HCT116 (cell line): ENCODE measurements at regions of chr1 and their contacts with region 1.

Region 1: GRCh38 chr1:69737527-69738185 is 169.9 kb downstream of the LRRC7 start:
- DNase-seq: peak; percentile 61
- ATAC-seq: peak; percentile 81
- H3K4me3 ChIP-seq: no peak overlapping the region
- H3K27ac ChIP-seq: no peak overlapping the region
- H3K4me1 ChIP-seq: no peaks in the 10 kb centered on the region
- H3K27me3 ChIP-seq: peaks cover 30% of the 10 kb centered on the region
- CTCF ChIP-seq: peak; percentile 46 to 78 (median 65); a peak in 5 of 6 replicates
- POLR2A ChIP-seq: no peak
- RAD21 ChIP-seq: peak; percentile 79

Region 2: DNA sequence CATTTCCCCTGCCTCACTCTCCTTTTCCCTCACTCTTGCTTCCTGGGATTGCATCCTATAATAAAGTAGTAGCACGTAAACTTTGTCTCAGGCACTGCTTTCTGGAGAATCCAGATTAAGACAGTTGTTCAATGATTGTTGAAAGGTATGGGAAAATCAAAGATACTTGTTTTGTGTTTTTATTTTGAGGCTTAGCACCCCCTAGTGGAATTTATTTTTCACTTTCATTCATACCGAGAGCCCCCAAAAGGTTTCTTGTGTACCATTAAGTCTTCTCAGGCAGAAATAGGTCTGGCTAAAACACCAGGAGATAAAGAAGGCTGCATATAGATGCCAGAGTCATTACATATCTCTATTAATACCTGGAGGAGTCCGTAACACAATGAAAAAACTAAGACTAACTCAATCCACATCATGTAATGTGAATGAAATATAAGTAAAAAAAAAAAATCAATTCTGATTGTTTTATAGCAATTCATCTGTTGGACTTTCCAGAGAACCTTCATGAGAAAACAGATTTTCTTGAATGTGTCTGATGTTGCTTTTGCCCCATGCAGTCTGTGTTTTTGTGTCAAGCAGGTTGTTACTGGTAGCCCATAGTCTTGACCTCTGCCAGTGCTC is 1391.4 kb before region 1 on chr1:
- CTCF ChIA-PET with region 1: no interaction called
- POLR2A ChIA-PET with region 1: no interaction called
- RAD21 ChIA-PET with region 1: no interaction called
- intact Hi-C with region 1: loop called (anchors 10 kb)
- DNase-seq: peak; percentile 45
- ATAC-seq: peak; percentile 42
- H3K4me3 ChIP-seq: no peak overlapping the region
- H3K27ac ChIP-seq: no peak overlapping the region
- H3K4me1 ChIP-seq: peaks cover 0 to 31% of the 10 kb centered on the region in 2 experiments; a peak in 3 of 4 replicates
- H3K27me3 ChIP-seq: no peaks in the 10 kb centered on the region
- CTCF ChIP-seq: peak; percentile 46 to 75 (median 57); a peak in 5 of 6 replicates
- POLR2A ChIP-seq: no peak
- RAD21 ChIP-seq: peak; percentile 57

Region 3: DNA sequence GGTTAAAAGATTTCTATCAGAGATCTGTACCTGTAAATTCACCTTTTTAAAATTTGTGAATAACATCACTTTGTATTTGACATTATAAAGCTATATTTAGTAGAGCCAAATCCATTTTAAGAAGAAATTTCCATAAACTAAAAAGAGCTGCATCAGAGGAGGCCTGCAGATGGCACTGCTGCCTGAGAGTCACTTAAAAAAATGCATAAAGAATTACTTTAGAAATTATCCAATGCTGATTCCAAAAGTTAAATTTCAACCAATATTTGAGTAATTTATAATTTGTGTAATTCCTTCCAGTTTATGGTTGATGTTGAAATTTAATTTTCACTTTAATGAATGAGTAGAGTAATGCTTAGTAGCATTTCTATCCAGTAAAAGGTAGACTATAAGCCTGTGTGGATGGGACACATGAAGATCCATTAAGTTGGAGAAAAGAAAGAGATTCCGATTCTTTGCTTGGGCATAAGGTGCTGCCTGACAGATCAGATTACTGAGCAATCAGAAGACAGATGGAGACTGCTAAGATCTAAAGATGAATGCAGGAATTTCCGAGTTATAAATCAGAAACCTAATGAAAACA is 1267.2 kb before region 1 on chr1:
- CTCF ChIA-PET with region 1: no interaction called
- POLR2A ChIA-PET with region 1: no interaction called
- RAD21 ChIA-PET with region 1: interaction called in 1 of 2 experiments, 3 read pairs
- intact Hi-C with region 1: loop called (anchors 2 kb)
- DNase-seq: no peak
- ATAC-seq: peak; percentile 49
- H3K4me3 ChIP-seq: no peak overlapping the region
- H3K27ac ChIP-seq: no peak overlapping the region
- H3K4me1 ChIP-seq: no peaks in the 10 kb centered on the region
- H3K27me3 ChIP-seq: no peaks in the 10 kb centered on the region
- CTCF ChIP-seq: peak; percentile 54 to 72 (median 58); a peak in 5 of 6 replicates
- POLR2A ChIP-seq: no peak
- RAD21 ChIP-seq: peak; percentile 61

Region 4: GRCh38 chr1:68600049-68600661 is 1137.5 kb before region 1 on chr1:
- CTCF ChIA-PET with region 1: no interaction called
- POLR2A ChIA-PET with region 1: no interaction called
- RAD21 ChIA-PET with region 1: no interaction called
- intact Hi-C with region 1: loop called (anchors 1 kb)
- DNase-seq: peak; percentile 13
- ATAC-seq: peak; percentile 74; the same call in 1 of the 2 replicates
- H3K4me3 ChIP-seq: no peak overlapping the region
- H3K27ac ChIP-seq: no peak overlapping the region
- H3K4me1 ChIP-seq: no peaks in the 10 kb centered on the region
- H3K27me3 ChIP-seq: no peaks in the 10 kb centered on the region
- CTCF ChIP-seq: peak; percentile 26 to 80 (median 70); a peak in 5 of 6 replicates
- POLR2A ChIP-seq: no peak
- RAD21 ChIP-seq: peak; percentile 65

Region 5: GRCh38 chr1:68819190-68819829 is 918.3 kb before region 1 on chr1:
- CTCF ChIA-PET with region 1: interaction called, 5 read pairs
- POLR2A ChIA-PET with region 1: no interaction called
- RAD21 ChIA-PET with region 1: no interaction called
- intact Hi-C with region 1: loop called (anchors 10 kb)
- DNase-seq: peak; percentile 31
- ATAC-seq: peak; percentile 97
- H3K4me3 ChIP-seq: no peak overlapping the region
- H3K27ac ChIP-seq: no peak overlapping the region
- H3K4me1 ChIP-seq: no peaks in the 10 kb centered on the region
- H3K27me3 ChIP-seq: peaks cover 4% of the 10 kb centered on the region; the same call in 1 of the 2 replicates
- CTCF ChIP-seq: peak; percentile 22 to 70 (median 61); a peak in 5 of 6 replicates
- POLR2A ChIP-seq: no peak
- RAD21 ChIP-seq: peak; percentile 69

Region 6: DNA sequence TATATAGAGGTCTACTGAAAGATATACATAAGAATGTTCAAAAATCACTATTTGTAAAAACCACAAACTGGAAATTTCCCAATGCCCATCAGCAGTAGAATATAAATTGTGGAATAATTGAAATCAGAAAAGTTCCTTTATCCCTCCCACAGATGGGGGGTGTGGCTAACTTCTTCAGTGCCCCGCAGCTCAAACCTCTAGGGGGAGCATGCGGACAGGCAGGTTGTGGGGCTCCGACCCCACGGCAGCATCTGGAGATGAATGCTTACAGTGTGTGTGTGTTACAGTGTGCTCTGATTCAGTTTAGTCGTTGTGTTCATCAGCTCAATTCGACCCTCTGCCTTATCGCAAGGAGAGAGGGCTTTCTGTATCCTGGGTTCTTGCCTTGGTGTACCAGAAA is 432.0 kb before region 1 on chr1:
- CTCF ChIA-PET with region 1: no interaction called
- POLR2A ChIA-PET with region 1: no interaction called
- RAD21 ChIA-PET with region 1: no interaction called
- intact Hi-C with region 1: loop called (anchors 10 kb)
- DNase-seq: peak; percentile 18
- ATAC-seq: peak; percentile 91
- H3K4me3 ChIP-seq: no peak overlapping the region
- H3K27ac ChIP-seq: no peak overlapping the region
- H3K4me1 ChIP-seq: no peaks in the 10 kb centered on the region
- H3K27me3 ChIP-seq: 0 out of 2 replicates have a peak, but pooled peaks cover 3% of the 10 kb centered on the region
- CTCF ChIP-seq: peak in 2 of 3 experiments; percentile 79 to 82; a peak in 5 of 6 replicates
- POLR2A ChIP-seq: no peak
- RAD21 ChIP-seq: peak; percentile 52

Region 7: GRCh38 chr1:69700770-69701169 is 36.9 kb before region 1 on chr1:
- CTCF ChIA-PET with region 1: no interaction called
- POLR2A ChIA-PET with region 1: no interaction called
- RAD21 ChIA-PET with region 1: no interaction called
- intact Hi-C with region 1: no loop called
- DNase-seq: peak; percentile 6
- ATAC-seq: peak; percentile 88
- H3K4me3 ChIP-seq: no peak overlapping the region
- H3K27ac ChIP-seq: no peak overlapping the region
- H3K4me1 ChIP-seq: no peaks in the 10 kb centered on the region
- H3K27me3 ChIP-seq: no peaks in the 10 kb centered on the region
- CTCF ChIP-seq: peak; percentile 26 to 53 (median 51); a peak in 5 of 6 replicates
- POLR2A ChIP-seq: no peak
- RAD21 ChIP-seq: peak; percentile 62